ENCODE measurements at regions of chr21 and their contacts with region 1.

Region 1: DNA sequence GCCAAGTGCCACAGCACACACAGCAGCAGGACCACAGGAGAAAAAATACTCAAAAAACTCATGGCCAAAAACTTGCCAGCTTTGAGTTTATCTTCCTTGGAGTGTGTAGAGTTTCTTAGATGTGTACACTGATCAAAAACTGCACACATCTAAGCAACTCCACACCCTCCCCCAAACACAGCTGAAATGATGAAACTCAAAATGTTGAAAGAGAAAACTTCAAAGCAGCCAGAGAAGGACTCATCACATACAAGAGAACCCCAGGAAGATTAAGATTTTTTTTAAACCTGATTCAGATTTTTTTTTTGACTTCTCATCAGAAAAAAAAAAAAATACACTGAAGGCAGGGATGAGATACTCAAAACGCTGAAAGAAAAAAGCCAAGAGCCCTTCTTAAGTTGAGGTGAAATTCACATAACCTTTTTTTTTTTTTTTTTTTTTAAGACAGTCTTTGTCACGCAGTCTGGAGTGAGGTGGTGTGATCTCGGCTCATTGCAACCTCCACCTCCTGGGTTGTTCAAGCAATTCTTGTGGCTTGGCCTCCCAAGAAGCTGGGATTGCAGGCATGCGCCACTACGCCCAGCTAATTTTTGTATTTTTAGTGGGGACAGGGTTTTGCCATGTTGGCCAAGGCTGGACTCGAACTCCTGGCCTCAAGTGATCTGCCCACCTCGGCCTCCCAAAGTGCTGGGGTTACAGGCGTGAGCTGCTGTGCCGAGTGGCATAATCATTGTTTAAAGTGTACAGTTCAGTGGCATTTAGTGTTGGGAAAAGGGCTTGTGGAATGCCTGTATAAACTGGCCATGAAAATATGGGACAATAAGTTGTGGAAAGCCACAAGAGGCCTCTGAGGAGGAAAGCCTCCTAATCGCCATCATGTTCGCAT is 20.9 kb upstream of the PDXK start:
- DNase-seq: peak in 1 of 3 donors; percentile 2
- ATAC-seq: no peak
- H3K4me3 ChIP-seq: no peak overlapping the region
- H3K27ac ChIP-seq: no peak overlapping the region
- H3K4me1 ChIP-seq: peaks cover 0 to 3% (median 0%) of the 10 kb centered on the region in 4 donors
- H3K27me3 ChIP-seq: no peaks in the 10 kb centered on the region
- CTCF ChIP-seq: no peak
- POLR2A ChIP-seq: no peak

Region 2: DNA sequence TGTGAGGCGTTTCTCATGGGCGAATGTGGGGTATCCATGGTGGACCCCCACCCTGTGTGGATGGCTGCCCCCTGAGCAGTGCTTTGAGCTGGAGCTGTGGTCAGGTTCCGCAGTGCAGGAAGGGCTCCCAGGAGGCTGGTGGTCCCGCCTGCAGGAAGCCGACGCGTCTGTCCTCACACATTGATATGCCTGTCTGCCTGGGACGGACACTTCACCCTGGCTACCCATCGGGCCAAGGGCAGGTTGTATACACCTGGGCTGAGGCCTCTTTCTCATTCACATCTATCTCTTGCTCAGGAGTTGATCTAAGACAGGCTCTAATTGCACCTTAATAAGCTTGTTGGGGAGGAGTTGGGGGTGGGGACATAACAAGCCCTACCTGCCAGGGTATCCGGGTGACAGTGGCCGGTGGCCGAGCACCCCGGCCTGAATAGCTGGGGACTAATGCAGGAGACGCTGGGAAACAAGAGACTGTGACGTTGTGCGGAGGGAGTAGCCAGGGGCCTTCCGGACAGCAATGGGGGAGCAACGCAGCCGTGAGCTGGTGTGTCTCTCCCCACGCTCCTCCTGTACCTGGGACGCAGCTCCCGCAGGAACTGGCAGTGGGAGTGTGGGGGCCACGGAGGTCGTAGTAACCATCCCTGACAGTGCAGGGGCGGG is 42.6 kb after region 1 on chr21:
- intact Hi-C with region 1: loop called in 1 of 2 experiments (anchors 10 kb)
- DNase-seq: no peak
- ATAC-seq: peak in 3 of 4 donors; percentile 6 to 57 (median 33)
- H3K4me3 ChIP-seq: no peak overlapping the region
- H3K27ac ChIP-seq: no peak overlapping the region
- H3K4me1 ChIP-seq: peaks cover 0 to 26% (median 7%) of the 10 kb centered on the region in 4 donors
- H3K27me3 ChIP-seq: no peaks in the 10 kb centered on the region
- CTCF ChIP-seq: no peak
- POLR2A ChIP-seq: no peak

Region 3: DNA sequence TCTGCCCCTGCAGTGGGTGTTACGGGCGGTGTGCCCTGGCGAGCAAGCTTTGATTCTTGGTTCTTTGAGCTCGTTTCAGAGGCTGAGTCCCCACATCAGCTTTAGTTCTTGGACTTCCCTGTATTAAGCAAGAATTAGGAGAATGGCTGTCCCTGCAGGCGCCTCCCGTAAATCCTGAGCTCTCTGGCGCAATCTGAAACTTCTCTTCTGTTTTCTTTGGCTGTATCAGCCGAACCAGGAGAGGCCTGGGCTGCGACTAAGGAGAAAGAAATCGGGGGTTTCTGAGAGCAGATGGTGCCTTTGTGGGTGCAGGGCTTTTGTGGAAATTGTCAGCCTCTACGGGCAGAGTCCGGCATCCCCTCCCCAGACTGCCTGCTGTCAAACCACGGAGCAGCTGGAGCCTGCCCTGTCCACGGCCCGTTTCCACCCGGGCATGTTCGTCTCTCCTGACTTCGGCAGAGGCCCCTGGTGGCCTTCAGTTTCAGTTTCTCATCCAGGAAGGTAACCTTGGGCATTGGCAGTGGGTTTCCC is 60.2 kb after region 1 on chr21:
- intact Hi-C with region 1: loop called in 1 of 2 experiments (anchors 10 kb)
- DNase-seq: no peak
- ATAC-seq: peak; percentile 55 to 73 (median 64)
- H3K4me3 ChIP-seq: no peak overlapping the region
- H3K27ac ChIP-seq: peak overlapping the region; percentile 30 to 49 (median 43)
- H3K4me1 ChIP-seq: peaks cover 0 to 23% (median 9%) of the 10 kb centered on the region in 4 donors
- H3K27me3 ChIP-seq: no peaks in the 10 kb centered on the region
- CTCF ChIP-seq: no peak
- POLR2A ChIP-seq: no peak

Measured in right lobe of liver (tissue), 6 donors.